ENCODE measurements at regions of chr2 and their contacts with region 1.

Region 1: DNA sequence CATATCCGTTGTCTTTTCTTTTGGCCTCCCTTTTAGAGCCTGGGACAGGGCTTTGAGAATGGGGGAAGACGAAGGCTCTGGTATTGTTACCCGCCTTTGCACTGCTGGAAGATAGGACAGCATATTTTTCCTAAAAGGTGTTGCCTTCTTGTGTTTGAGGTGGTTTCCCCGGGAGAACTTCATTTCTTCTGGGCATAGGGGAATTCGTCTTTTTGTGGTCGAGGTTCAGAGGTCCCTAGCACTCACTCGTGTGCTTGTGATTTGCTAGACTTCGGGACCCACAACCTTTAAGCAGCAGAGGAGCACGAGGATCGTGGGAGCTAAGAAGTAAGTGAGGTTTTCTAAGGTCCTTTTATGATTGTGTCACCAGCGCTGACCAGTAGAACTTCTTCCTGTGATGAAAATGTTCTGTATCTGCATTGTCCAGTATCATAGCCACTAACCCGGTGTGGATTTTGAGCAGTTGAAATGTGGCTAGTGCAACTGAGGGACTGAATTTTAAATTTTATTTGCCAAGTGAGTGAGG is 611 bp downstream of the ZNF512 start:
- DNase-seq: no peak
- ATAC-seq: peak; percentile 7 to 30 (median 28)
- H3K4me3 ChIP-seq: peak overlapping the region; percentile 62 to 92
- H3K4me3 Mint-ChIP-seq: peak overlapping the region; percentile 89 to 94 (median 91)
- H3K27ac ChIP-seq: peak overlapping the region; percentile 70
- H3K27ac Mint-ChIP-seq: peak overlapping the region; percentile 89 to 92
- H3K4me1 ChIP-seq: peaks cover 21 to 27% of the 10 kb centered on the region in 2 experiments
- H3K4me1 Mint-ChIP-seq: peaks cover 53 to 57% (median 57%) of the 10 kb centered on the region in 3 donors
- H3K27me3 ChIP-seq: no peaks in the 10 kb centered on the region
- H3K27me3 Mint-ChIP-seq: no peaks in the 10 kb centered on the region

Region 2: DNA sequence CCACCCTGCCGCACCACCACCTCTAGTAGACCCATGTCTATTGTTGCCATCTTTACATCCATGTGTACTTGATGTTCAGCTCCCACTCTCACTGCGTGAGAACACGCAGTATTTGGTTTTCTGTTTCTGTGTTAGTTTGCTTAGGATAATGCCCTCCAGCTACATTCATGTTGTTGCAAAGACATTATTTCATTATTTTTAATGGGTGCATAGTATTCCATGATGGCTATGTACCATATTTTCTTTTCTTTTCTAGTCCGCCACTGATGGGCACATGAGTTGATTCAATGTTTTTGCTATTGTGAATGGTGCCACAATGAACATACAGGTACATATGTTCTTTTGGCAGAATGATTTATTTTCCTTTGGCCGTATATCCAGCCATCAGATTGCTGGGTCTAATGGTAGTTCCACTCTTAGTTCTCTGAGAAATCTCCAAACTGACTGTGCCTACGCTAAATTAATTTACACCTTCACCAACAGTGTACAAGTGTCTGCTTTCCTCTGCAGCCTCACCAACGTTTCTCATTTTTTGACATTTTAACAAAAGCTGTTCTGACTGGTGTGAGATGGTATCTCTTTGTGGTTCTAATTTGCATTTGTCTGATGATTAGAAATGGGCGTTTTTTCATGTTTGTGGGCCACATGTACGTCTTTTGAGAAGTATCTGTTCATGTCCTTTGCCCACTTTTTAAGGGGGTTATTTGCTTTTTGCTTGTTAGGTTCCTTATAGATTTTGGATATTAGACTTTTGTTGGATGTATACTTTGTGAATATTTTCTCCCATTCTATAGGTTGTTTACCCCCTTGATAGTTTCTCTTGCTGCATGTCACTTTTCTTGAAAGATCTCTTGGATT is 192.4 kb before region 1 on chr2:
- CTCF ChIA-PET with region 1: no interaction called
- POLR2A ChIA-PET with region 1: interaction called in 1 of 2 experiments, 11 read pairs
- DNase-seq: peak in 4 of 35 experiments; percentile 19 to 71 (median 42)
- ATAC-seq: peak; percentile 46 to 81 (median 56)
- H3K4me3 ChIP-seq: no peak overlapping the region
- H3K4me3 Mint-ChIP-seq: peak overlapping the region; percentile 41 to 70 (median 66)
- H3K27ac ChIP-seq: peak overlapping the region; percentile 76
- H3K27ac Mint-ChIP-seq: peak overlapping the region; percentile 92
- H3K4me1 ChIP-seq: peaks cover 6 to 15% of the 10 kb centered on the region in 2 experiments
- H3K4me1 Mint-ChIP-seq: peaks cover 30 to 34% (median 34%) of the 10 kb centered on the region in 3 donors
- H3K27me3 ChIP-seq: no peaks in the 10 kb centered on the region
- H3K27me3 Mint-ChIP-seq: no peaks in the 10 kb centered on the region